Heart left ventricle (tissue), 16 donors: ENCODE measurements at regions of chr22 and their contacts with region 1.

Region 1: GRCh38 chr22:37538590-37539357 is 19.6 kb upstream of the CARD10 start:
- DNase-seq: peak; percentile 93 to 96 (median 95)
- ATAC-seq: peak; percentile 97 to 100 (median 99)
- H3K4me3 ChIP-seq: peak overlapping the region in 1 of 12 donors; percentile 15
- H3K27ac ChIP-seq: peak overlapping the region in 3 of 12 donors; percentile 10 to 48 (median 47)
- H3K4me1 ChIP-seq: peaks cover 0 to 28% (median 4%) of the 10 kb centered on the region in 12 donors
- H3K27me3 ChIP-seq: no peaks in the 10 kb centered on the region
- CTCF ChIP-seq: peak; percentile 91 to 98 (median 94)
- POLR2A ChIP-seq: no peak

Region 2: GRCh38 chr22:37492428-37493344 is 46.1 kb before region 1 on chr22:
- intact Hi-C with region 1: no loop called
- DNase-seq: no peak
- ATAC-seq: peak in 1 of 4 donors; percentile 13
- H3K4me3 ChIP-seq: no peak overlapping the region
- H3K27ac ChIP-seq: peak overlapping the region in 1 of 12 donors; percentile 19
- H3K4me1 ChIP-seq: peaks cover 0 to 9% (median under 1%) of the 10 kb centered on the region in 12 donors
- H3K27me3 ChIP-seq: peaks cover 0 to 4% (median 0%) of the 10 kb centered on the region in 9 donors
- CTCF ChIP-seq: peak in 9 of 12 donors; percentile 7 to 40 (median 32)
- POLR2A ChIP-seq: no peak

Region 3: DNA sequence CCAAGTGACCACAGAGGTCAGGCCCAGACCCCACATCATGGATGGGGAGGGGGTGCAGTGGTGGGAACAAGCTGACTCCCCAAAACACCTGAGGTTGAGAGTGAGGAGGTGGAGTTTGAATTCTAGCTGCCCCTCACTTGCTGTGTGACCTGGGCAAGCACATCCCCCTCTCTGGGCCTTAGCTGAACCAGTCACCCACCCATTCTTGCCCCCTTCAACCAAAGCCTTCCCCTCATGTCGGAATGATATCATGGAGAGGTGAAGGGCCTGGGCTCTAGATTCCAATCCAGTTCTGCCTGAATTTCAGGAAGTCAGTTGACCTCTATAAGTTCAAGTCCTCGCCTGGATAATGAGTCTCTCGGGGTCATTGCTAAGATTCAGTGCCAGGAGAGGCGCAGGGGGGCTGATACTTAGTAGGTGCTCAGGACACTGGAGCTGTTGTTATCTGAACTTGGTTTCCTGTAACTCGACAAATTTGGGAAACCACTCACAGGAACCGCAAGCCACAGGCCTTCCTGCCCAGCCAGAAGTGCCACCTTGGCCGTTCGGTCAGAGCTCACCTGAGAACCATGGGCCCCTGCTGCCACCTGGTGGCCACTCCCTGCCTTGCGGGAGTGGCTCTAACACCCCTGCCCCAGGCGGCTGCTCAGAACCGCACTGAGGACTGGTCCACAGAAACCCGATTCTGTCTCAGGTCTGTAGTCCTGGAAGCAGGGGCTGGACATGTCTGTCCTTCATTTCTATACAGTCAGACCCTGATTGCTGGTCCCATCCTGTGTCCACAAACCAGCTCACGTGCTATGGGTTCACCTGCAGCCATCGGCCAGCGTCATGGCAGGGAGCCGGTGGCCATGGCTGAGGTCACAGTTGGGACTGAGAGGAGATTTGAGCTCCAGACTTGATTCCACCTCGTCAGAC is 28.4 kb after region 1 on chr22:
- intact Hi-C with region 1: loop called in 7 of 10 experiments (anchors 1 to 5 kb)
- DNase-seq: peak; percentile 75 to 91 (median 79)
- ATAC-seq: peak; percentile 32 to 67 (median 50)
- H3K4me3 ChIP-seq: no peak overlapping the region
- H3K27ac ChIP-seq: peak overlapping the region in 10 of 12 donors; percentile 43 to 100 (median 64)
- H3K4me1 ChIP-seq: peaks cover 12 to 85% (median 62%) of the 10 kb centered on the region in 12 donors
- H3K27me3 ChIP-seq: peaks cover 0 to 6% (median 0%) of the 10 kb centered on the region in 9 donors
- CTCF ChIP-seq: peak; percentile 89 to 97 (median 92)
- POLR2A ChIP-seq: no peak

Region 4: GRCh38 chr22:37591823-37592404 is 53.1 kb after region 1 on chr22:
- intact Hi-C with region 1: loop called (anchors 1 to 2 kb)
- DNase-seq: no peak
- ATAC-seq: no peak
- H3K4me3 ChIP-seq: peak overlapping the region in 2 of 12 donors; percentile 16 to 33
- H3K27ac ChIP-seq: peak overlapping the region in 1 of 12 donors; percentile 42
- H3K4me1 ChIP-seq: peaks cover 0 to 25% (median 2%) of the 10 kb centered on the region in 12 donors
- H3K27me3 ChIP-seq: no peaks in the 10 kb centered on the region
- CTCF ChIP-seq: no peak
- POLR2A ChIP-seq: no peak

Region 5: GRCh38 chr22:37599153-37599552 is 60.4 kb after region 1 on chr22:
- intact Hi-C with region 1: loop called in 1 of 10 experiments (anchors 1 kb)
- DNase-seq: peak in 1 of 5 donors; percentile 61
- ATAC-seq: peak in 1 of 4 donors; percentile 28
- H3K4me3 ChIP-seq: no peak overlapping the region
- H3K27ac ChIP-seq: no peak overlapping the region
- H3K4me1 ChIP-seq: peaks cover 0 to 5% (median 0%) of the 10 kb centered on the region in 12 donors
- H3K27me3 ChIP-seq: no peaks in the 10 kb centered on the region
- CTCF ChIP-seq: no peak
- POLR2A ChIP-seq: no peak